Activated CD8-positive, alpha-beta T cell treated with anti-CD3 and anti-CD28 coated beads for 36 hours (primary cell): ENCODE measurements at regions of chr1 and their contacts with region 1.

Region 1: DNA sequence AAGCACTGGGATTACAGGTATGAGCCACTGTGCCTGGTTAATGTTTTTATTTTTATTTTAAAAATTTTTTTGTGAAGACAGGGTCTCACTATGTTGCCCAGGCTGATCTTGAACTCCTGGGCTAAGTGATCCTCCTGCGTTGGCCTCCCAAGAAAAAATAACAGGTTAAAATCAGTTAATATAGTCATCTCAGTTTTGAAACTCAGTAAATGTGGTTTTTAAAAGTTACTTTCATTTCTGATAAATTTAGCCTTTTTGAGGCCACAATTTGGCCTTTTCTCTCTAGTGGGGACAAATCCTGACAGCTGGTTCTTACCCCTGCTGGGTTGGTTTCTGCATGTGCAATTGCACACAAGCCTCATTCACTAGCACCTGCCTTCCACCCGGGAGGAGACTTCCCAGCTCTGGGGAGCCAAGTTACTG is 13.3 kb downstream of the PMF1 start:
- DNase-seq: peak; percentile 51
- ATAC-seq: peak; percentile 3
- H3K4me3 Mint-ChIP-seq: no peak overlapping the region
- H3K27ac Mint-ChIP-seq: peak overlapping the region; percentile 92
- H3K4me1 Mint-ChIP-seq: peaks cover 55% of the 10 kb centered on the region
- H3K27me3 Mint-ChIP-seq: no peaks in the 10 kb centered on the region
- CTCF ChIP-seq: no peak

Region 2: DNA sequence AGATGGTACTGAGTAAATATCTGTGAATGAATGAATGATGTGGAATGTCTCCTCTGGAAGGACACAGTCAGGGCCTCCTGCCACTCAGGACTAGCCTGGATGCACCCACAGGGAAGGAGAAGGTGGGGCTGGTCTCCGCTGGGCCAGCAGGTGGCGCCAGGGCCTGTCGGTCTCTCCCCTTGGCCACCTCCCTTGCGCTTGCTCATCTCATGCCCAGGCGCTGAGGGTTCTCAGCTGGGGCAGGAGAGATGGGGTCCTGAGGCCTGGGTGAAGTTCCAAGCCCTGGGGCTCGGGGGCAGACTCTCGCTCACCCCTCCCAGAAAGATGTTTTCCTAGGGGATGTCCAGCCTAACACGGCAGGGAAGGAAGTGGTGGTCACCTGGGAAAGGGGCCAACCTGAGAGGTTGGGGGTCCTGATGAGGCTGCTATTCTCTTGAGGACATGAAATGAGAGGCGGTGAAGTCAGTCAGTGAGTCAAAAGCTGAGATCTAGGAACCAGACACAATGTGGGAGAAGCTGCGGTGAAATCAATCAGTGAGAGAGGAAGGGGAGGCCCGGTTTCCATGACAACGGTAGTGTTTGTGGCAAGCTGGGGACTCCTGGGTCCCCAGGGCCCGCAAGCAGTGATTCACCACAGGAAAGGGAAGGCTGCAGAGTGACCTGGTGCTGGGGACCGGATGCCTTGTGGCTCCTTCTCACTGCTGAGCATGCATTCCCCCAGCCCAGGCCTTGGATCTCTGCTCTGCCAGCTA is 129.3 kb before region 1 on chr1:
- CTCF ChIA-PET with region 1: interaction called, 43 read pairs
- POLR2A ChIA-PET with region 1: interaction called, 38 read pairs
- intact Hi-C with region 1: loop called (anchors 10 kb)
- DNase-seq: peak; percentile 97
- ATAC-seq: peak; percentile 81
- H3K4me3 Mint-ChIP-seq: peak overlapping the region; percentile 52
- H3K27ac Mint-ChIP-seq: peak overlapping the region; percentile 93
- H3K4me1 Mint-ChIP-seq: peaks cover 45% of the 10 kb centered on the region
- H3K27me3 Mint-ChIP-seq: peaks cover 20% of the 10 kb centered on the region
- CTCF ChIP-seq: peak; percentile 99

Region 3: DNA sequence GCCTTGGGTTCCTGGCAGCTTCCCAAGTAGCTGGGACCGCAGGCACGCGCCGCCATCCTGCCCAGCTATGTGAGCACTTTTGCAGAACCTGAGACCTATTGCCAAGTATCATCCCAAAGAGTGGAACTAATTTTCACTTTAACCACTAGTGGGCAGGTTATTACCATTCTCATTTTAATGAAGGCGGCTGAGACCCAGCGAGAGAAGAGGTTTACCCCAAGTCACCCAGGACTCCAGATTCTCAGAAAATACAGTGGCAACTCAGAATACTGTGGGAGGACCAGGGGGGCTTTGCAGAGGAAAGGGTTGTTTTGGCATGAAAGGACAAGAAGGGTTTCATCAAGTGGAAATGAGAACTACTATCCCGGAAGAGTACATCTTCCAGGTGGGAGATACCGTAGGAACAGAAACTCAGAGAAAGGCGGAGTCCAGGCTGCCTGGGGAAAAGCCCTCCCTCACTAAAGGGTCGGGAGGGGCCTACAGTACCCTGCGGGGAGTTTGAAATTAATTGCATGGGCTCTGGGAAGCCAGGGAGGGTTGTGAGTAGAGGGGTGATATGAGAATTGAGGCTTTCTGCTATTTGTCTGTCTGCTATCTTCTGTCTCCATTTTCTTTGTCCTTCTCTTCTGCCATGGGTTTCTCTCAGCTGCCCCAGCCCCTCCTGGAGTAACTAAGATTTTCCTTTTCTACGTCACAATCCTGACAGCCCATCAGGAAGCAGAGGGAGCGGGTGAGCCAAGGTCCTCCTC is 79.9 kb before region 1 on chr1:
- CTCF ChIA-PET with region 1: interaction called, 269 read pairs
- POLR2A ChIA-PET with region 1: interaction called, 60 read pairs
- intact Hi-C with region 1: loop called (anchors 1 kb)
- DNase-seq: peak; percentile 68
- ATAC-seq: peak; percentile 74
- H3K4me3 Mint-ChIP-seq: peak overlapping the region; percentile 58
- H3K27ac Mint-ChIP-seq: peak overlapping the region; percentile 90
- H3K4me1 Mint-ChIP-seq: peaks cover 52% of the 10 kb centered on the region
- H3K27me3 Mint-ChIP-seq: no peaks in the 10 kb centered on the region
- CTCF ChIP-seq: peak; percentile 68

Region 4: GRCh38 chr1:156160743-156161171 is 65.4 kb before region 1 on chr1:
- CTCF ChIA-PET with region 1: interaction called, 27 read pairs
- POLR2A ChIA-PET with region 1: interaction called, 60 read pairs
- intact Hi-C with region 1: no loop called
- DNase-seq: peak; percentile 80
- ATAC-seq: peak; percentile 80
- H3K4me3 Mint-ChIP-seq: peak overlapping the region; percentile 63
- H3K27ac Mint-ChIP-seq: peak overlapping the region; percentile 66
- H3K4me1 Mint-ChIP-seq: peaks cover 59% of the 10 kb centered on the region
- H3K27me3 Mint-ChIP-seq: no peaks in the 10 kb centered on the region
- CTCF ChIP-seq: no peak

Region 5: GRCh38 chr1:156198831-156199349 is 27.2 kb before region 1 on chr1:
- CTCF ChIA-PET with region 1: interaction called, 57 read pairs
- POLR2A ChIA-PET with region 1: interaction called, 66 read pairs
- intact Hi-C with region 1: no loop called
- DNase-seq: peak; percentile 72
- ATAC-seq: peak; percentile 81
- H3K4me3 Mint-ChIP-seq: no peak overlapping the region
- H3K27ac Mint-ChIP-seq: no peak overlapping the region
- H3K4me1 Mint-ChIP-seq: peaks cover 60% of the 10 kb centered on the region
- H3K27me3 Mint-ChIP-seq: no peaks in the 10 kb centered on the region
- CTCF ChIP-seq: no peak

Region 6: GRCh38 chr1:156282479-156283222 is 56.5 kb after region 1 on chr1 and contains the start of gene SMG5:
- CTCF ChIA-PET with region 1: interaction called, 7 read pairs
- POLR2A ChIA-PET with region 1: interaction called, 15 read pairs
- intact Hi-C with region 1: no loop called
- DNase-seq: peak; percentile 97
- ATAC-seq: peak; percentile 91
- H3K4me3 Mint-ChIP-seq: peak within 1 kb of the TSS; percentile 99
- H3K27ac Mint-ChIP-seq: peak within 1 kb of the TSS; percentile 94
- H3K4me1 Mint-ChIP-seq: peaks cover 32% of the 10 kb centered on the region
- H3K27me3 Mint-ChIP-seq: no peaks in the 10 kb centered on the region
- CTCF ChIP-seq: no peak
- total RNA-seq, gene SMG5: 70.3 to 70.7 TPM

Region 7: DNA sequence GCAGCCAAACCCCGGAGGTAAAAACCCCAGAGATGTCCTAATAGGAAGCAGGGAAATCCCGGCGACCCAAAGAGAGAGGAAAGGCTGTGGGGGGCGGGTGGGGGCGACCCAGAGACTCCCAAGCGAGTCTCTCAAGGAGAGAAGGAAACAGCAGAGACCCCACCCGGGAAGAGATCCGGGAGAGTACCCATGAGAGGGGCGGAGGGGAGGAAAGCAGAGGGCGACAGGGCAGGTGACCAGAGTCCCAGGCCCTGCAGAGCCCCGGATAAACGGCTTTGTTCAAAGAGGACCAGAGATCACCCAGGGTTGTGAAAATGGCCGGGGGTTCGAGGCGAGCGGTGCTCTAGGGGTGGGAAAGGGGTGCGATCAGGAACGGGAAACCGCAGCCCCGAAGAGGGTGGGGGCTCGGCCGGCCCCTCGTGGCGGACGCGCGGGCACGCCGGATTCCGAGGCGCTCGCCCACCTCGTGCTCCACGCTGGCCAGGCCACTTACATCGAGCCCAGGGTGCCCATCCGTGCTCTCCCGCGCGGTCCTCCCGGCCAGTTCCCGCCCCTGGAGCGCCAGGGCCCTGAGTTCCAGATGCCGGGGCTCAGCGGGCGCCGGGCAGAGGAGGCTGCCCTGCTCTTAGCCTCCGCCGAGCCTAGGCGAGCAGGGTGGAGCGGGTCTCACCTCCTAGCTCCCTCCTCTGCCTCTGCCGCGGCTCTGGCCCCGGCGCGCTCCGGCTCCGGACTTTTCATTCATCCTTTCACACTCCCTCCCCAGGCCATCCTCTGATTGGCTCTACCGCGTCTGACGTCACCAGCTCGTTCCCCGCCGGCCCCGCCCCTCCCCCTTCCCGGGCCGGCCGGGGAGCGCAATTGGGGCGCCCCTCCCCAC is 195.2 kb after region 1 on chr1:
- CTCF ChIA-PET with region 1: no interaction called
- POLR2A ChIA-PET with region 1: no interaction called
- intact Hi-C with region 1: no loop called
- DNase-seq: peak; percentile 85
- ATAC-seq: peak; percentile 88
- H3K4me3 Mint-ChIP-seq: peak overlapping the region; percentile 72
- H3K27ac Mint-ChIP-seq: no peak overlapping the region
- H3K4me1 Mint-ChIP-seq: peaks cover 18% of the 10 kb centered on the region
- H3K27me3 Mint-ChIP-seq: peaks cover 71% of the 10 kb centered on the region
- CTCF ChIP-seq: no peak